Activated CD8-positive, alpha-beta memory T cell treated with anti-CD3 and anti-CD28 coated beads, Interleukin-2, amount 10 ng/mL, durations not matched to agents 7 days and 5 days (primary cell): ENCODE measurements at regions of chr11 and their contacts with region 1.

Region 1: GRCh38 chr11:123407130-123407995 is 22.7 kb upstream of the GRAMD1B start:
- DNase-seq: peak; percentile 79
- ATAC-seq: peak; percentile 90
- H3K4me3 Mint-ChIP-seq: peak overlapping the region; percentile 74
- H3K27ac Mint-ChIP-seq: peak overlapping the region; percentile 75
- H3K4me1 Mint-ChIP-seq: peaks cover 48% of the 10 kb centered on the region
- H3K27me3 Mint-ChIP-seq: no peaks in the 10 kb centered on the region

Region 2: GRCh38 chr11:123308077-123308476 is 99.3 kb before region 1 on chr11:
- CTCF ChIA-PET with region 1: interaction called, 22 read pairs
- DNase-seq: no peak
- ATAC-seq: no peak
- H3K4me3 Mint-ChIP-seq: no peak overlapping the region
- H3K27ac Mint-ChIP-seq: no peak overlapping the region
- H3K4me1 Mint-ChIP-seq: peaks cover 34% of the 10 kb centered on the region
- H3K27me3 Mint-ChIP-seq: no peaks in the 10 kb centered on the region

Region 3: GRCh38 chr11:123373754-123374621 is 33.4 kb before region 1 on chr11:
- CTCF ChIA-PET with region 1: no interaction called
- DNase-seq: no peak
- ATAC-seq: peak; percentile 36
- H3K4me3 Mint-ChIP-seq: no peak overlapping the region
- H3K27ac Mint-ChIP-seq: no peak overlapping the region
- H3K4me1 Mint-ChIP-seq: peaks cover 45% of the 10 kb centered on the region
- H3K27me3 Mint-ChIP-seq: no peaks in the 10 kb centered on the region

Region 4: DNA sequence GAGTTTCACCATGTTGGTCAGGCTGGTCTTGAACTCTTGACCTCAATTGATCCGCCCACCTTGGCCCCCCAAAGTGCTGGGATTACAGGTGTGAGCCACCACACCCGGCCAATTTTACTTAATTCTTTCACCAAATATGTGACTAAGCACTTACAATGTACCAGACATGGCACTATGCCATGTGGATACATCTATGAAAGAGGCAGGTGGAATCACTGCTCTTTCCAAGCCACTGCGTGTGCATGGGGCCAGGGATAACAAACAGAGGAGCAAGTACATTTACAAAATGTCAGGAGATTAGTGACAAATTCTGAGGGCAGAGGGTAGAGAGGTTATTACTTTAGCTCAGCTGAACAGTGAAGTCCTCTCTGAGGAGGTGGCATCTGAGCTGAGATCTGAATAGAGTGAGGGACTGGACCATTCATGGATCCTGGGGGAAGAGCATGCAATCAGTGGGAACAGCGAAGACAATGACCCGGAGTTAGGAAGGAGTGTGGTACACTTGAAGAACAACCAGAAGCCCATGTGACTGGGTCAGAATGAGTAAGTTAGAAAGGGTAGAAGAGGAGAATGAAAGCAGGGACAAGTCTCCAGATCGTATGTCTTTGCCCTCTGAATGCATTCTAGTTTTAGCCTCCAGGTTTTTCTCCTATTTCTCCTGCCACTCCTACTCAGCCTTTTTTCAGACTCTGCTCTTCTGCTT is 15.6 kb before region 1 on chr11:
- CTCF ChIA-PET with region 1: interaction called, 18 read pairs
- DNase-seq: no peak
- ATAC-seq: peak; percentile 24
- H3K4me3 Mint-ChIP-seq: peak overlapping the region; percentile 0
- H3K27ac Mint-ChIP-seq: peak overlapping the region; percentile 52
- H3K4me1 Mint-ChIP-seq: peaks cover 41% of the 10 kb centered on the region
- H3K27me3 Mint-ChIP-seq: peaks cover 3% of the 10 kb centered on the region

Region 5: DNA sequence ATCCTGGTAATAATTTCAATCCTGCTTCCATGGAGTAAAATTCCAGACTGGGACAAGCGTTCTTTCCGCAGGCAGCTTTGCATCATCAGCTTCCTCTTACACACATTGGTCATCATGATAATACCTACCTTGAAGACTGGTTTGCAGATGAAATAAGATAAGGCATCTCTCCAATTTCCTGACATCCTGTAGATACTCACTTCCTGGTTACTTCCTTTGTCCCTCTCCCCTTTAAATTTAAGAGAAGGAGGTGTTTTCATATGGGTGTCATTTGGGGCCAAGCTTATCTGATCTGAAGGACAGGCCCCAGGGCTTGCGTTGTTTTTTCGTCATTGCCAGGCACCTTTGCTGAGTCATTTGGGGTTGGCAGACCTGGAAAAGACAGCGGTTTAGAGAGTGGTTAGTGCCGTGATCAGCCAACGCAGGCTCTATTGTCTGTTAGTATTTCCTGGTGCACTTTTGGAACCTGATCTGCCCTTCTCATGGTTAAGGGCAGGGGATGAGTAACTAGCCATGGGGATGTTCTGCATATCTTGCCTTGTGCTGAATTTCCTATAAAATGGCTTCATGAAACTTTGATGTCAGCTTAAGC is 46.8 kb after region 1 on chr11:
- CTCF ChIA-PET with region 1: interaction called, 21 read pairs
- DNase-seq: peak; percentile 91
- ATAC-seq: peak; percentile 74
- H3K4me3 Mint-ChIP-seq: peak overlapping the region; percentile 75
- H3K27ac Mint-ChIP-seq: peak overlapping the region; percentile 97
- H3K4me1 Mint-ChIP-seq: peaks cover 92% of the 10 kb centered on the region
- H3K27me3 Mint-ChIP-seq: no peaks in the 10 kb centered on the region

Region 6: DNA sequence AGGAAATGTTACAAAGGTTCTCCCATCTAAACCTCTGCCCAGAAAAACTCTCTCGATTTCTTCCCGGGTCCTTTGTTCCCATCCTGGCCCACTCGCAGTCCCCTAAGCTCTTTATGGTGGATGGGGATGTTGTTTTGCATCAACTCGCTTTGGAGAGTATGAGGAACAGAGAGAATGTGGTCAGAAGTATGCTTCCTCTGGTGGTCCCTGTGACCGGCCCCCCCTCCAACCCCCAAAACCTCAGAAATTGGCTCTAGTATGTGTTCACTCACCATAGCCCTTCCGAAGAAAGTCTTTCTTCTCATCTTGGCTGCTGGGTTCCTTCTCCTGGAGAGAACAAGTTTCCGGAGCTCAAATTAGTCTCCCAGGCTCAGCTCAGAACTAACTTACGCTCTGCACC is 77.1 kb after region 1 on chr11:
- CTCF ChIA-PET with region 1: interaction called, 248 read pairs
- DNase-seq: no peak
- ATAC-seq: no peak
- H3K4me3 Mint-ChIP-seq: no peak overlapping the region
- H3K27ac Mint-ChIP-seq: no peak overlapping the region
- H3K4me1 Mint-ChIP-seq: peaks cover 50% of the 10 kb centered on the region
- H3K27me3 Mint-ChIP-seq: no peaks in the 10 kb centered on the region

Region 7: DNA sequence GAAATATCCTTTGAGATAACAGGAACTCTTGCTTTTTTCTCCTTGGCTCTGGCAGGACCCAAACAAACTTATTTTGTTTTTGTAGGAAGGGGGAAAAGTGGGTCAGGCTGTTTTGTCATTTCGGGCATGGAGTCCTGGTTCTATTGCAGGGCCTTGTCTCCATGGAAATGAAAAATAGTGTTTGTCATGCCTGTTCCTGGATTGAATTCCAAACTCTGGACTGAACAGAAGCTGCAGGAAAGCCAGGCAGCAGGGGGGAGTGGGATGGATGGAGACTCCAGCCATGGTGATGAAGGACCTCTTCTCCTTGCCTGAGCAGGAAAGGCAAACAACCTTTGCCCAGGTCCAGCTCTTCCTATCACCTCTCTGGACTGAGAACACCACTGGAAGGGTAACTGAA is 160.1 kb after region 1 on chr11:
- CTCF ChIA-PET with region 1: no interaction called
- DNase-seq: no peak
- ATAC-seq: no peak
- H3K4me3 Mint-ChIP-seq: no peak overlapping the region
- H3K27ac Mint-ChIP-seq: no peak overlapping the region
- H3K4me1 Mint-ChIP-seq: peaks cover 3% of the 10 kb centered on the region
- H3K27me3 Mint-ChIP-seq: no peaks in the 10 kb centered on the region

Region 8: DNA sequence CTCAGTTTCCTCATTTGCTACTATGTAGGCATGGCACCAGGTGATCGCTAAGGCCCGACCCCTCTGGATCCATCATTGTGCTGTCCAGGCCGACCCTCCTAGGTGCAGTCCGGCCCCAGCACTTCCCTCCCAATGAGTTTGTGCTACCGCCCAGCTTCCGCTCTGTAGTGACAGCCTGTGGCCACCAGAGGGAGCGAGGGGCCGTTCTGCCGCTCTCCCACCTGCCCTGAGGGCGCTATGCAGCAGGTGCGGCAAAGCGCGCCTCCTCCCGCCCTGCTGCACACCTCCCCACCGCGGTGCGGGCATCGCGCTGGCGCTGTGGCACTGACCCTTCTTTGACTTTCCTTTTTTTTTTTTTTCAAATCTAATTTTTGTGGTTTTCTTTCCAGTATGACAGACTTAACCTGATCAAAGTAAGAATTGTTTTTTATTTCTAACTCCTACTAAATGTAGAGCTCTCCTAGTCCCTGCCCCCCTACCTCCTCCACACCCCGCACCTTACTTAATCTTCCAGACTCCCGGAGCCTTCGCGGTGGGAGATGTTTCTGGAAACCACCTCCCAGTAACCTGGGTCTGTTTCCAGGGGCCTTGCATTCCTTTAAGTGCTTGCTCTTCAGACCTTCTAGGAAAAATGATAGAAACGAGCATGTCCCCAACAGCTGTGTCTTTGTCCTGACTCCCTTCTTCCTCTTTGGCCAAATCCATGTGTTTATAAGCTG is 173.4 kb after region 1 on chr11:
- CTCF ChIA-PET with region 1: interaction called, 11 read pairs
- DNase-seq: peak; percentile 77
- ATAC-seq: peak; percentile 82
- H3K4me3 Mint-ChIP-seq: no peak overlapping the region
- H3K27ac Mint-ChIP-seq: no peak overlapping the region
- H3K4me1 Mint-ChIP-seq: peaks cover 31% of the 10 kb centered on the region
- H3K27me3 Mint-ChIP-seq: no peaks in the 10 kb centered on the region